ENCODE measurements at regions of chr6 and their contacts with region 1.

Region 1: GRCh38 chr6:37005061-37005810 is at the start of gene FGD2:
- DNase-seq: no peak
- H3K4me3 ChIP-seq: peak within 1 kb of the TSS; percentile 37
- H3K27ac ChIP-seq: peak within 1 kb of the TSS; percentile 47
- H3K4me1 ChIP-seq: peaks cover 7% of the 10 kb centered on the region
- H3K27me3 ChIP-seq: no peaks in the 10 kb centered on the region
- CTCF ChIP-seq: no peak
- total RNA-seq, gene FGD2: 6.0 TPM

Region 2: GRCh38 chr6:36904114-36904513 is 101.1 kb before region 1 on chr6:
- intact Hi-C with region 1: loop called (anchors 5 kb)
- DNase-seq: no peak
- H3K4me3 ChIP-seq: no peak overlapping the region
- H3K27ac ChIP-seq: peak overlapping the region; percentile 49
- H3K4me1 ChIP-seq: peaks cover 49% of the 10 kb centered on the region
- H3K27me3 ChIP-seq: no peaks in the 10 kb centered on the region
- CTCF ChIP-seq: no peak

Region 3: GRCh38 chr6:37059344-37060206 is 54.3 kb after region 1 on chr6:
- intact Hi-C with region 1: no loop called
- DNase-seq: peak; percentile 61
- H3K4me3 ChIP-seq: no peak overlapping the region
- H3K27ac ChIP-seq: peak overlapping the region; percentile 66
- H3K4me1 ChIP-seq: peaks cover 26% of the 10 kb centered on the region
- H3K27me3 ChIP-seq: no peaks in the 10 kb centered on the region
- CTCF ChIP-seq: peak; percentile 42

Measured in left ventricle myocardium inferior (tissue), 1 donor.